Activated T-helper 1 cell treated with anti-CD3 and anti-CD28 coated beads, Interleukin-12 subunit alpha, Interleukin-12 subunit beta, Interleukin-2, Interleukin-4 antibody, amounts not matched to agents 30 ng/mL and 10 ng/mL and 1 ng/mL, durations not matched to agents 14 hours and 24 hours and 36 hours (primary cell): ENCODE measurements at regions of chr7 and their contacts with region 1.

Region 1: DNA sequence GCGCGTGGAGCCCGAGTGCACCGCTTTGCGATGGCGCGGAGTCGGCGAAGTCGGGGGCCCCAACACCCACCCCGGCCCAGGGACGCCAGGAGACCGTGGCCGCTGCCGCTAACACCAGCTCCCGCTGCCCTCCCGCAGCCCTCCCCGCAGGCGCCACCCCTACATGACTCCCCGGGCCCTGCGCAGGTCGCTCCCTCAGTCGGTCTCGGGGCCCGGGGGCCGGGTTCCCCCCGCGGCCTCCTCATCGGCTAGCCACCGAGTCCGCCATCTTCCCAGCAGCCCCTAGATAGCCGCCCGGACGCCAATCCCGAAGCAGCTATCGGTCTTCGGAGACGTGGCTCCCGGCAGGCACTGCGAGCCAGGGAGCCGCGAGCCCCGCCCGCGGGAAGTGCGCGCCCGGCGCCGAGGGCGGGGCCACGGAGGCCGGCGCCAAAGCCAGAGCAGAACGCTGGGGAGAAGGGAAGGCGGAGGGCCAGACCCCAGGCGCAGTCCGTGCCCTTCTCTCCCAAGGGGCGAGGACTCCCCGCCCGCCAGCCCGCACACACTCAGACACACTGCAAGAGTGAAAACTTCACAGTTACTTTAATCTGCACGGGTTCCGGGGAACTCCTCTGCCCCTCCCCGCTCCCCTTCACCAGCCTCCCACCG is at the start of gene FASTK:
- DNase-seq: peak; percentile 88
- H3K4me3 Mint-ChIP-seq: peak within 1 kb of the TSS; percentile 95
- H3K27ac Mint-ChIP-seq: peak within 1 kb of the TSS; percentile 88
- H3K4me1 Mint-ChIP-seq: peaks cover 42% of the 10 kb centered on the region
- H3K27me3 Mint-ChIP-seq: peaks cover 10% of the 10 kb centered on the region
- total RNA-seq, gene FASTK: 92.6 and 96.3 TPM in 2 replicates

Region 2: DNA sequence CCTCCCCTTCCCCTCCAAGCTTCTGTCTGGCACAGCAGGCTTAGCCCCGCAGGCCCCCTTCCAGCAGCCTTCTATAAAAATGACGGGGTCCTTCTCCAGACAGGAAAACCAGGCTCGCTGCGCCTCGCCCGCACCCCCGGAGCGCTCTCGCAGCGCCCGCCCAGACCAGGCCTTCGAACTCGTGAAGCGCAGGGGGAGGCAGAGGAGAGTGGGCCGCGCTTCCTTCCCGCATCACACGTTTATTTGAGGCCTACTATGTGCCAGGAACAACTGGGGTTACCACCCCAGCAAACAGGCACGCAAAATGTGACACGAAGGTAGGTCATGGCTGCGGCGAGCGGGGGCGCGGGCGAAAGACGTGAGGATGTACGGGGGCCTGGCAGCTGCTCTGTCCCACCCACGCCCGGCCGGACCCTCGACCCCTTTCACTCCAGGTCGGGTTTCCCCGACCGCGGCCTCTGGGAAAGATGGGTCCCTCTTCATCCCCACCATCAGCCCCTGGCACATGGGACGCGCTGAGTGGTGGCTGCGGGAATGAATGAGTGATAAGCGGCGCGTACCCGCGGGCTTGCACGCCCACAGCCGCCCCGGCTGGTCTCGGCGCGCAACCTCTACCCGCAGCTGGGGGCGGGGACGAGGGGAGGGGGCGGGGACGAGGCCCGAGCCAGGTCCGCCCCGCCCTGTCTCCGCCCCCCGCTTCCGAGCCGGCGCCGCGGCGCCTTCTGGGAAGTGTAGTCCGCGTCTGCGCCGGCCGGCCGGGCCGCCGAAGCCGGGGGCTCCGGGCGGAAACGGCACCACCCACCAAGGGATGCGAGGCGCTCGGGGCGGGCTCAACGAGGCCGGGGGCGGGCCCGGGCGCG is 1366.4 kb before region 1 on chr7:
- intact Hi-C with region 1: loop called (anchors 10 kb)
- DNase-seq: peak; percentile 79
- H3K4me3 Mint-ChIP-seq: peak overlapping the region; percentile 74
- H3K27ac Mint-ChIP-seq: peak overlapping the region; percentile 68
- H3K4me1 Mint-ChIP-seq: peaks cover 13% of the 10 kb centered on the region
- H3K27me3 Mint-ChIP-seq: peaks cover 4% of the 10 kb centered on the region

Region 3: GRCh38 chr7:151017953-151018420 is 62.7 kb before region 1 on chr7:
- intact Hi-C with region 1: loop called (anchors 2 kb)
- DNase-seq: peak; percentile 73
- H3K4me3 Mint-ChIP-seq: peak overlapping the region; percentile 82
- H3K27ac Mint-ChIP-seq: peak overlapping the region; percentile 81
- H3K4me1 Mint-ChIP-seq: peaks cover 39% of the 10 kb centered on the region
- H3K27me3 Mint-ChIP-seq: peaks cover 19% of the 10 kb centered on the region

Region 4: DNA sequence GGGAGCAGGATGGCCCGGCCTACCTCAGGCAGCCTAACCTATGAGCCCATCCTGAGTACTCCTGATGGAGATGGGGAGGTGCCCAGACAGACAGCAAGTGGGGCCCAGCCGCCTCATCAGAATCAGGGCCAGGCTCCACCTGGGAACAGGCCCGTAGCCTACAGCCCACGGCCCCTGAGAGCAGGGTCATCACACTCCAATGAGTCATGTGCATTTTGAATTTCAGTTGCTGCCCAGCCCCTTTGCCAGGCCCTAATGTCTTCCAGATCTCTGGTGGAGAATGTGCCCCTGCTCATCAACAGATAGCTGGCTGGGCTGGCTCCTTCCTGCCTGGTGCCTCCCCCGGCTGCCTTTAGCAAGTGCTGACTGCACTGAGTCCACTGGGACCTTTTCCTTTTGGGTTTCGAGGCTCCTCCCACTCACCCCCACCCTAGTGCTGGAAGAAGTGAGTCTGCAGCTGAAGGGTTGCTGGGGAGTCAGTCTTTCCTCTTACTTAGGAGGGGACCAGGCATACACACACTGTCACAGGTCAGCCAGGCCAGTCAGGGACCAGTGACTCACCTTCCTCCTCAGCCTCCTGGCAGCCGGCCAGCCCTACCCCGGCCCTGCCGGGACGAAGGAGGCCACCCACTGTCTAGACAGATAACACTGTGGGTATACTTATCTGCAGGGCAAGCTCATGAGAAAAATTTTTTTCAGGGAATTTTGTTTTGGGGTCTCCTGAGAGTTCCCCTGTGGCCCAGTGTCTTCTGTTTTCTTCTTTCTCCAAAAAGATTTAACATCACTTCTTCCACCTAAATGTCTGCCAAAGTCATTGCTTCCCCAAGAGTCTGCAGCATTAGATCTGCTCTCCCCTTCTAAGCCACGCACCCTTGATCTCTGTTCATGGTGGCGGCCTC is 41.4 kb before region 1 on chr7:
- intact Hi-C with region 1: loop called (anchors 1 kb)
- DNase-seq: no peak
- H3K4me3 Mint-ChIP-seq: peak overlapping the region; percentile 19
- H3K27ac Mint-ChIP-seq: peak overlapping the region; percentile 96
- H3K4me1 Mint-ChIP-seq: peaks cover 18% of the 10 kb centered on the region
- H3K27me3 Mint-ChIP-seq: no peaks in the 10 kb centered on the region

Region 5: DNA sequence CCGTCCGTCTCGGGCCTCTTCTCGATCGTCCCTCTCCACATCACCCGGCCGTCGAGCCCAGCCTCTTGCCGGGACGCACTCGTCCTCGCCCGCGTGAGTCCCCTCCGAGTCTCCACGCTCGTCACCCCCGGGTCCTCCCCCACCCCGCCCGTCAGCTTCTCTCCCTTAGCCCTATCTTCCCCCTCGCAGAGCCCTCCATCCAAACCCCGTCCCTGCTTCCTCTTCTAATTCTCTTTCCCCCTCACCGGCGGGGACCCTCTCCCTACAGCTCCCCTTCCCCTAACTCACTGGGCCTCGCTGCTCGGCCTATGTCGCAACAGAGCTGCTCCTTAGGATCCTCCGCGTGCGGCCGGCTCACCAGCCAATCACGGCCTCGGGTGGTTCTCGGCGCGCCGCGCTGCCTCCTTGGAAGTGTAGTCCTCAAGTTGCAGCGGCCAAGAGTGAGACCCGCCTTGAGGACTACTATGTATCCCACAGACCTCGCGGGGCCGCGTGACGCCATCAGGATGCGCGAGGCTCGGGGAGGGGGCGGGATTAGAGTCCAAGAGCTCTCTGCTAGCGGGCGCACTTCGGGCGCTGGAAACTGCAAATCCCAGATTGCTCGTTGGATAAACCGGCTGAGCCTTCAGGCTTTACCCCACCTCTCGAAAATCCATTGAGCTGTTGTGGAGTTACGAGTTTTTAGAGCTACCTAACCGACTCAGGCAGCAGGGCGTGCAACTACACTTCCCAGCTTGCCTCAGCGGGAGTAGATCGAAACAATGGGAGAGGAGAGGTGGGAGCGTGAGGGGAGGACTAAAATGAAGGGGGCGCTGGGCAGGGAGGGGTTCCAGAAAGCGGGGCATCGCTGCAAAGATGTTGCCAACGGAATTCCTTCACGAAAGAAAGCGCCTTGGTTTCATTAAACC is 146.5 kb after region 1 on chr7 and contains the start of gene ABCF2:
- intact Hi-C with region 1: loop called (anchors 1 kb)
- DNase-seq: peak; percentile 97
- H3K4me3 Mint-ChIP-seq: peak within 1 kb of the TSS; percentile 98
- H3K27ac Mint-ChIP-seq: peak within 1 kb of the TSS; percentile 94
- H3K4me1 Mint-ChIP-seq: peaks cover 43% of the 10 kb centered on the region
- H3K27me3 Mint-ChIP-seq: peaks cover 2% of the 10 kb centered on the region
- total RNA-seq, gene ABCF2: 81.7 and 85.4 TPM in 2 replicates

Region 6: DNA sequence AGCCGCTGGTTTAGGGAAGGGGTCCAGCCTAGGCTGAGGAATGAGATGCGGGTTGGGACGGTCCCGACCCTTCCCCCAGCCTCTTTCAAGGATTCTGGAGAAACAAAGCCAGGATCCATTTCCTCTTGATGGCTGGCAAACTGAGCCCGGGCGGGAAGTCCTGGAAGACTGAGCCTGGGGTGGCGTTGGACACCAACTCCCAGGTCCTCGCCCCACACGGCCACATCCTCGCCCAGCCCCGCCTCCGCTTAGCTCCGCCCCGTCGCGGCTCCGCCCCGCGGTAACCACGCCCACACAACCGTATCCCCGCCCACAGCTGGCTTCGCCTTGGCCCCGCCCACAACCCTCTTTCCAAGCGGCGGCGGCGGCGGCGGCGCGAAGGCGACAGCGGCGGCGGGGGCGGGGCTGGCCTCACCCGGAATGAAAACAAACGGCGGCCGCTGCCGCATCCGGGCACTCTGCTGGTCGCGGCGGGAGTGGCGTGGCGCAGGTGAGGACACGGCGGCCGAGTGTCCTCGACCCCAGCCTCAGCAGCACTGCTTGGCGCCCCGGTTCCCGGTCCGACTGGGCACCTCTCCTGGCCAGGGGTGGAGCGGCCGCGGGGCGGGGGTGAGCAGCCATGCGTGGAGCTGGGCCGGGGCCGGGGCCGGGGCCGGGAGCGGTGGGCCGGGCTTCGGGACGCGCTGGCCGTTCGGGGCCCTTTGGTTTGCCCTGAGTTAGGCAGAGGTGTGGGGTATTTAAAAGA is 260.9 kb after region 1 on chr7 and contains the start of gene NUB1:
- intact Hi-C with region 1: loop called (anchors 5 kb)
- DNase-seq: peak; percentile 92
- H3K4me3 Mint-ChIP-seq: peak within 1 kb of the TSS; percentile 83
- H3K27ac Mint-ChIP-seq: peak within 1 kb of the TSS; percentile 76
- H3K4me1 Mint-ChIP-seq: peaks cover 23% of the 10 kb centered on the region
- H3K27me3 Mint-ChIP-seq: no peaks in the 10 kb centered on the region
- total RNA-seq, gene NUB1: 40.3 and 41.2 TPM in 2 replicates

Region 7: GRCh38 chr7:151744656-151745638 is 664.3 kb after region 1 on chr7:
- intact Hi-C with region 1: no loop called
- DNase-seq: no peak
- H3K4me3 Mint-ChIP-seq: no peak overlapping the region
- H3K27ac Mint-ChIP-seq: no peak overlapping the region
- H3K4me1 Mint-ChIP-seq: peaks cover 9% of the 10 kb centered on the region
- H3K27me3 Mint-ChIP-seq: peaks cover 5% of the 10 kb centered on the region

Region 8: DNA sequence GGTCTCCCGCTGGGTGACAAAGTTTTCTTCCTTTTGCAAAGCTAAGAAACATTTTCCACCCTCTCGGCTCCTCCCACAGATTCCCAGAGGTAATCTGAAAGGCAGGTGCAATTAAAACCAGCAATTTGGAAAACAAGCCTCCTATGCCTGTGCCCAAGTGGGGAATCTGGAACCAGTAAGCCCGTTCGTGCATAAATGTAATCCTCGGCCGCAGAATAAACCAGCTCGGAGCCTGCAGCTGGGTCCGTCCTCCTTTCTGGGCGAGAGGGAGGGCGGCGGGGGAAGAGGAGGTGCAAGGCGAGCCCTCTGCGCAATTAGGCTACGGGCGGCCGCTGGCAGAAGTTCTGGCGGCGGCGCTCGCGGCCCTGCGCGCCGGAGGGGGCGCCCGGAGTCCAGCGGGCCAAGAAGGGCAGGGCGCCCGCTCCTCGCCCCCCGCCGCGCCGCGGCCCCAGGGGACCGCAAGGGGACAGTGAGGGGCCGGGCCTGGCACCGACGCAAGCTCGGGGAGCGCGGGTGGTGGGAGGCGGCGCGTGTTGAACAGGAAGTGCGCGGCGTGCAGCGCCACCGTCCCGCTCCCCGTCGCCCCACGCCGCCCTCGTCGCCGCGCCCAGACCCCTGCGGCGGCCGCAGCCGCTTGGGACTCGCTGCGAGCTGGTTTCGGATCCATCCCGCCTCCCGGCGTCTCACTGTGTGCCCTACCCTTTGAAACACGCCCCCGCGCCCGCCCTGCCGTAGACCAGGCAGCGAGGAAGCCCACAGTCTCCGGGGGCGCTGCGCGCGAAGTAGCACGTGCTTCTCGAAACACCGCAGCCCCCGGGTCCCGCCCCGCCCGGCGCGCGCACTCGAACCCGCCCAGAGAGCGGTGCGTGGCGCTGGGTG is 796.5 kb after region 1 on chr7 and contains the start of gene PRKAG2:
- intact Hi-C with region 1: no loop called
- DNase-seq: peak; percentile 27
- H3K4me3 Mint-ChIP-seq: peak within 1 kb of the TSS; percentile 94
- H3K27ac Mint-ChIP-seq: peak within 1 kb of the TSS; percentile 71
- H3K4me1 Mint-ChIP-seq: peaks cover 6% of the 10 kb centered on the region
- H3K27me3 Mint-ChIP-seq: peaks cover 37% of the 10 kb centered on the region
- total RNA-seq, gene PRKAG2: 16.9 and 18.5 TPM in 2 replicates